Head of caudate nucleus (tissue), 42 donors: ENCODE measurements at regions of chr2 and their contacts with region 1.

Region 1: DNA sequence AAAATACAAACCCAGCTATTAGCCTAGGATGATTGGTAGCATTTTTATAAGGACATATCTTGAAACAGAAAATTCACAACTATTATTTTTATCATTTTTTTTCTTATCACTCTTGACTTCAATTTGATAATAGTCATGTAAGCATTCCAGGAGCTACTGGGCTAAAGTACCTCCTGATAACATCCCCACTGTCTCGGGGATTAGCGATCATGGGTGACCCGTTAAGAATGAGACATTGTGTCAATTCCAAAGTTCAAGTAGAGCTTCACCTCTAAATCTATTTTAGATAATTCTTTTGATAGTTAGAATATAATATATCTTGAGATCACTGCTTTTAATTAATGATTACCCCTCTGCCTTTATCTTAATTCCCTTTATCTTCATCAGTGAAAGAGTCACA is 1204.5 kb upstream of the CHAC2 start:
- DNase-seq: no peak

Region 2: GRCh38 chr2:52289776-52290175 is 273.4 kb before region 1 on chr2:
- intact Hi-C with region 1: no loop called
- DNase-seq: no peak

Region 3: DNA sequence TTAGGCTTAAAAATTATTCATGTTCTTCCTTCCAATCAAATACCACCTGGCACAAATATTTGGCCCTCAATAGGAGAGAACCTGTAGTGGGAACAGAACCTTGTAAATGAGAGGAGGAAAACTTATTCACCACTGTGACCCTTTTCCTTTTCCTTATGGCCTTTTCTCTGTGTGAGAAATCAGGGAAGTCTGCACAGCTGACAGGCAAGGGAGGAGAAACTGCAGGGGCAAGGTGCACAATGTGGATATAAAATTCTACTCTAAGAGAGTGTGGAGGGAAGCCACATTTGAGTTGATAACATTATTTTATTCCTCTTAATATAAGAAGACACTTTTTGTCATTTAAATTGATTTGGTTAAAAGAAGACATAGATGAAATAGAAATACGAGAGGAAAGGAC is 42.5 kb before region 1 on chr2:
- intact Hi-C with region 1: loop called (anchors 5 kb)
- DNase-seq: no peak

Region 4: GRCh38 chr2:52613064-52613463 is 49.9 kb after region 1 on chr2:
- intact Hi-C with region 1: no loop called
- DNase-seq: no peak